Endothelial cell of umbilical vein (primary cell): ENCODE measurements at regions of chr17 and their contacts with region 1.

Region 1: DNA sequence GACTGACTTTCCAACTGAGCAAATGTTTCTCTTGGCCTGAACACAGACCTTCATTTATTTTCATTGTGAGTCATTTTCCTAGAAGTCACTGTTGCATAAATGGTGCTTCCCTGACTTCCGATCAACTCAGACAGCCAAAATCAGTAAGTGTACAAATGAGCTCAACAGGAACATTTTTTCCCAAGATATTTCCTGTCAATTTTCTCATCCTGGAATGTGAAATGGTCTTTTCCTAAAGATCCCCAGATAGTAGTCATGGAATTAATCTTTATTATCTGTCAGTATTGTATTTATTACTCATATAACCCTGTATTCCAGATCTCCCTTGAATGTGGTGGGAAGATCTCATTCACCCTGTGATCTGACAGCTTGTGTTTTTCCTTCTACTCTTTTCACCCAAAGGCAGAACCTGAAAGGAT is 360.3 kb upstream of the KIF2B start:
- DNase-seq: peak; percentile 40
- H3K4me3 ChIP-seq: no peak overlapping the region
- H3K27ac ChIP-seq: no peak overlapping the region
- H3K4me1 ChIP-seq: peaks cover 6% of the 10 kb centered on the region
- H3K27me3 ChIP-seq: no peaks in the 10 kb centered on the region
- CTCF ChIP-seq: no peak
- POLR2A ChIP-seq: no peak

Region 2: GRCh38 chr17:53039981-53040380 is 422.4 kb before region 1 on chr17:
- CTCF ChIA-PET with region 1: no interaction called
- POLR2A ChIA-PET with region 1: no interaction called
- dilution Hi-C with region 1: no loop called
- intact Hi-C with region 1: loop called (anchors 2 kb)
- DNase-seq: peak; percentile 85
- H3K4me3 ChIP-seq: no peak overlapping the region
- H3K27ac ChIP-seq: peak overlapping the region; percentile 69
- H3K4me1 ChIP-seq: peaks cover 21% of the 10 kb centered on the region
- H3K27me3 ChIP-seq: no peaks in the 10 kb centered on the region
- CTCF ChIP-seq: no peak
- POLR2A ChIP-seq: peak; percentile 25

Region 3: GRCh38 chr17:53227514-53227913 is 234.9 kb before region 1 on chr17:
- CTCF ChIA-PET with region 1: no interaction called
- POLR2A ChIA-PET with region 1: no interaction called
- dilution Hi-C with region 1: no loop called
- intact Hi-C with region 1: loop called (anchors 10 kb)
- DNase-seq: no peak
- H3K4me3 ChIP-seq: no peak overlapping the region
- H3K27ac ChIP-seq: no peak overlapping the region
- H3K4me1 ChIP-seq: no peaks in the 10 kb centered on the region
- H3K27me3 ChIP-seq: no peaks in the 10 kb centered on the region
- CTCF ChIP-seq: no peak
- POLR2A ChIP-seq: no peak

Region 4: DNA sequence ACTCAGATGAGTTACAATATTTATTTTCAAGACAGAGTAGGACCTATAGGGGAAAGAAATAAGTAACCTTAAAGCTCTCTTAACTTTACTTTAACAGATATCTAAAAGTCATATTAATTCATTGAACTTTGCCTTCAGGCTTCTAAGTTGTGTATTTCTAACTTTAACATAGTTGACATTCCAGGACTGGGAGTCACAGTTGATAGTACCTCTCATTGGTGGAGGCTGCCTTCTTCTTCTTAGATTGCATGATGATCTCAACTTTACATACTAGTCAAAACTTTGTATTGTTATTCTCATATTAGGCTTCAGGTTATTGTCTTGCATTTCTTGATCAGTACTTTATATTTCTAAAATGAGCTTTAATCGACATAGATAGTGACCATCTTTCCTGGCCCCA is 10.2 kb after region 1 on chr17:
- CTCF ChIA-PET with region 1: interaction called, 6 read pairs
- POLR2A ChIA-PET with region 1: no interaction called
- dilution Hi-C with region 1: no loop called
- intact Hi-C with region 1: loop called (anchors 1 kb)
- DNase-seq: no peak
- H3K4me3 ChIP-seq: no peak overlapping the region
- H3K27ac ChIP-seq: no peak overlapping the region
- H3K4me1 ChIP-seq: no peaks in the 10 kb centered on the region
- H3K27me3 ChIP-seq: no peaks in the 10 kb centered on the region
- CTCF ChIP-seq: no peak
- POLR2A ChIP-seq: no peak

Region 5: GRCh38 chr17:53626286-53626685 is 163.9 kb after region 1 on chr17:
- CTCF ChIA-PET with region 1: no interaction called
- POLR2A ChIA-PET with region 1: no interaction called
- dilution Hi-C with region 1: no loop called
- intact Hi-C with region 1: loop called (anchors 5 kb)
- DNase-seq: no peak
- H3K4me3 ChIP-seq: no peak overlapping the region
- H3K27ac ChIP-seq: no peak overlapping the region
- H3K4me1 ChIP-seq: no peaks in the 10 kb centered on the region
- H3K27me3 ChIP-seq: no peaks in the 10 kb centered on the region
- CTCF ChIP-seq: no peak
- POLR2A ChIP-seq: no peak